ENCODE measurements at regions of chr2 and their contacts with region 1.

Region 1: DNA sequence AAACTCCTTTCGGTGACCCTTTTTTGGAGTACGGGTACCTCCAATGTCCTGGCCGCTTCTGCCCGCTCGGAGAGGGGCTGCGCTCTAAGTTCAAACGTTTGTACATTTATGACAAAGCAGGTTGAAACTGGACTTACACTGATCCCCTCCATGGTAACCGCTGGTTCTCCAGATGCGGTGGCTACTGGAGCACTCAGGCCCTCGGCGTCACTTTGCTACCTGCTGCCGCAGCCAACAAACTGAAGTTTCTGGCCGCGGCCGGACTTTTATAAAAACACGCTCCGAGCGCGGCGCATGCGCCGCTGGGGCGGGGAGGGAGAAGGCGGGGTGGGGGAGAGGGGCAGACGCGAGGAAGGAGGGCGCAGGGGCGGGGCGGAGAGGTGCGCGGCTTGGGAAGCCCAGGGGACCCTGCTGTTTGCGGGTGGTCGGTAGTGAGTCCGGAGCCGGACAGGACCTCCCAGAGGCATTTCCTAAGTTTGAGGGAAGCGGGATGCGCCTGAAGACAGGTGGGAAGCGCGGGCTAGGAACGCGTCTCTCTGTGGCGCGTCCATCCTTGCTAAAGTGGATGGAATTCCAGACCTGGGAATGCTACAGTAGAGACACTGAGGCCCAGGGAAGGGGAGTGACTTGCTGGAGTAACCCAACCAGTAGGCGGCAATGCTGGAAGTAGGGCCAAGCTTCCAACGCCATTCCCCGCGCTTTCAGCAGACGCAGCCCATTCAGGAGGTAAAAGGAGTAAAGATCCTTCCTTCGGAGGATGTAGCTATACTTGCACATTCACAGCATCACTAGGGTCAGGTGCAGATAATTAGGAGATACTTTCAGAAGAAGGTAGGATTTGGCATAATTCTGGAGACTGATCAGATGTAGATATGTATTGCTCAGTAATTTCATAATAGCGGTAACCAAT is at the start of gene CXCR4:
- DNase-seq: peak; percentile 70 to 91 (median 73)
- ATAC-seq: peak in 3 of 4 donors; percentile 34 to 73 (median 61)
- H3K4me3 ChIP-seq: peak within 1 kb of the TSS; percentile 33 to 82 (median 60)
- H3K27ac ChIP-seq: peak within 1 kb of the TSS in 10 of 12 donors; percentile 1 to 91 (median 57)
- H3K4me1 ChIP-seq: peaks cover 0 to 61% (median 19%) of the 10 kb centered on the region in 12 donors
- H3K27me3 ChIP-seq: peaks cover 0 to 46% (median 26%) of the 10 kb centered on the region in 9 donors
- CTCF ChIP-seq: peak in 2 of 12 donors; percentile 25 to 35
- POLR2A ChIP-seq: peak in 1 of 2 donors; percentile 44
- total RNA-seq, gene CXCR4: 1.2 to 21.3 (median 3.7) TPM

Region 2: GRCh38 chr2:135913727-135914365 is 204.3 kb before region 1 on chr2:
- intact Hi-C with region 1: loop called in 4 of 10 experiments (anchors 5 to 10 kb)
- DNase-seq: peak in 1 of 5 donors; percentile 16
- ATAC-seq: no peak
- H3K4me3 ChIP-seq: no peak overlapping the region
- H3K27ac ChIP-seq: no peak overlapping the region
- H3K4me1 ChIP-seq: no peaks in the 10 kb centered on the region
- H3K27me3 ChIP-seq: no peaks in the 10 kb centered on the region
- CTCF ChIP-seq: peak; percentile 66 to 87 (median 77)
- POLR2A ChIP-seq: no peak

Region 3: DNA sequence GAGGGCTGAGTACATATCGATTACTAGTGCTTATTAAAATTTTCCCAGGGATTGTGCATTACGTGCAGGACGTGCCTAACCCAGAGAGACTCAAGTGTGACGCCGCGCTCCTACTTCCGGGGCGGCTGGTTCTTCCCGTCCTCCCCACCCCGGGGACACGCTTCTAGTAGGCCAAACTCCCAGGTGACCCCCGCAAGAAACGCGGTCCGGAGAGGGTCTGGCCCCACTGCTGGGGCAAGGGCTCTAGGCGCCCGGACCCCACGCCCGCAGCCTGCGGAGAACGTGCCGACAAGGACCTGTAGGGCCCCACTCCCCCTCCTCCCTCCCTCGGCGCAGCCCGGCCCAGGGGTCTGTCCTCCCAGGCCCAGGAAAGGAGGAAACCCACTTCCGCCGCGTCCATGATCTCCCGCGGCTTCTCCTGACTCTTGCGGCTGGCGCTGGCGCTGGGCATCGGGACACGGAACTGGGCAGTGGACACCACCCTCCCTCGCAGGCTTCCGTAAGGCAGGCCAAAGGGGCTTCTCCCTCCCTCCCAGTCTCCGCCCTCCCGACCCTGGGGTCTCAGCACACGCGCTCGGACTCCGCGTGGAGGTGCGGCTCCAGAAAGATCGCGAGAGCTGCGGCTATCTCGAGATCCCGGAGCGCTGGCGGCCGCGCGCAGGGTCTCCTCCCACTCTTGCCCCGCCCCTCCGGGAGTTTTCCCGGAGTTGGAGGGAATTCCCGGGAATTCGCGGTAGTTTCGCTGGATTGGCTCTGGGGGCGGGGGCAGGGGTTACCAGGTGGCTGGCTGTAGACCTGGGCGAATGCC is 132.9 kb before region 1 on chr2 and contains the start of gene DARS1:
- intact Hi-C with region 1: loop called in 2 of 10 experiments (anchors 10 kb)
- DNase-seq: peak; percentile 94 to 97 (median 95)
- ATAC-seq: peak; percentile 96 to 99 (median 98)
- H3K4me3 ChIP-seq: peak within 1 kb of the TSS; percentile 71 to 98 (median 86)
- H3K27ac ChIP-seq: peak within 1 kb of the TSS; percentile 92 to 100 (median 96)
- H3K4me1 ChIP-seq: peaks cover 0 to 40% (median 19%) of the 10 kb centered on the region in 12 donors
- H3K27me3 ChIP-seq: no peaks in the 10 kb centered on the region
- CTCF ChIP-seq: no peak
- POLR2A ChIP-seq: peak in 1 of 2 donors; percentile 60
- total RNA-seq, gene DARS1: 51.2 to 64.4 (median 55.0) TPM

Region 4: GRCh38 chr2:136019306-136019705 is 98.9 kb before region 1 on chr2:
- intact Hi-C with region 1: loop called in 4 of 10 experiments (anchors 2 to 10 kb)
- DNase-seq: no peak
- ATAC-seq: peak in 1 of 4 donors; percentile 7
- H3K4me3 ChIP-seq: no peak overlapping the region
- H3K27ac ChIP-seq: peak overlapping the region in 1 of 12 donors; percentile 72
- H3K4me1 ChIP-seq: peaks cover 1 to 45% (median 7%) of the 10 kb centered on the region in 12 donors
- H3K27me3 ChIP-seq: no peaks in the 10 kb centered on the region
- CTCF ChIP-seq: no peak
- POLR2A ChIP-seq: no peak

Region 5: DNA sequence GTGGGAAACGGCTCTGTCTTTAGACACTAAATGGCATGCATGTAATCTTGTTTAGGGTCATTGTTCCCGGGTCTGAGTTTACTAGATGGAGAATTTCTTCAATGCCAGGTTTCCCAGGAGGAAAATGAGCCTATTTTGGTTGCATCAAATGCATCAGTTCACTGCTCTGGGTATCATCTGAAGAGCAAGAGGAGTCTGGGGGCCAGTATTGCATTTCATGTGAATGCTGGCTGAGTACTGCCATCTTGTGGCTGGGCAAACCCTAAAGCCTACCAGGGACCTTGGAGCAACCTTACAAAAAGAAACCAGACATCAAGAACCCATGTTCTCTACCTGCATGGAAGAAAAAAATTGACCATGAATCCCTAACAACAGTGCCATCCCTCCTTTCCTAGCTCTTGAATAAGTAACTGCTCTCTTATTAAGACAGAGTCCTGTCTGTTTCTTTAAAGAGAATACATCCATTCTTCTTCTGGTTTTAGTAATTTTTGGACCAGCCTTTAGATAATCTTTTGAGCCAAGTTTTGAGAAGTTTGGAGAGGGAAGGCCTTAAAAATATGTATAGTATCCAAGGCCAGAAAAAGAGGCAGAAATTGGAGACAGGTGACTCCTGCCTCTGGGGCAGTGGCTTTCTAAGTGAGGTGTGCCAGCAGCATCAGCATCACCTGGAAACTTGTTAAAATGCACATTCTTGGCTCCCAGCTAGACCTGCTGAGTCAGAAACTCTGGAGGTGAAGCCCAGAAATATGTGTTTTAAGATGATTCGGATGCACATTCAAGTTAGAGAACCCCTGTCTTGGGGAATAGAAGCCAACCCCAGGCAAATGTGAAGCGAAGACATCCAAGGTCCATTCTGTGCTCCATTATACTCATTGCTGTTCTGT is 260.8 kb after region 1 on chr2:
- intact Hi-C with region 1: loop called in 3 of 10 experiments (anchors 5 to 10 kb)
- DNase-seq: peak; percentile 33 to 61 (median 43)
- ATAC-seq: peak; percentile 63 to 80 (median 76)
- H3K4me3 ChIP-seq: no peak overlapping the region
- H3K27ac ChIP-seq: no peak overlapping the region
- H3K4me1 ChIP-seq: peaks cover 0 to 33% (median 1%) of the 10 kb centered on the region in 12 donors
- H3K27me3 ChIP-seq: no peaks in the 10 kb centered on the region
- CTCF ChIP-seq: peak; percentile 50 to 79 (median 68)
- POLR2A ChIP-seq: no peak

Measured in heart left ventricle (tissue), 16 donors.